B cell (primary cell): ENCODE measurements at regions of chr17 and their contacts with region 1.

Region 1: GRCh38 chr17:49997791-49998703 is 3.0 kb upstream of the DLX3 start:
- DNase-seq: peak; percentile 89
- ATAC-seq: peak; percentile 78
- H3K4me3 ChIP-seq: no peak overlapping the region
- H3K4me3 Mint-ChIP-seq: no peak overlapping the region
- H3K27ac ChIP-seq: no peak overlapping the region
- H3K27ac Mint-ChIP-seq: no peak overlapping the region
- H3K4me1 ChIP-seq: peaks cover 42 to 45% of the 10 kb centered on the region in 2 donors
- H3K4me1 Mint-ChIP-seq: peaks cover 38% of the 10 kb centered on the region
- H3K27me3 ChIP-seq: peaks cover 0 to 74% (median 52%) of the 10 kb centered on the region in 4 experiments
- H3K27me3 Mint-ChIP-seq: peaks cover 75% of the 10 kb centered on the region
- CTCF ChIP-seq: peak; percentile 92

Region 2: DNA sequence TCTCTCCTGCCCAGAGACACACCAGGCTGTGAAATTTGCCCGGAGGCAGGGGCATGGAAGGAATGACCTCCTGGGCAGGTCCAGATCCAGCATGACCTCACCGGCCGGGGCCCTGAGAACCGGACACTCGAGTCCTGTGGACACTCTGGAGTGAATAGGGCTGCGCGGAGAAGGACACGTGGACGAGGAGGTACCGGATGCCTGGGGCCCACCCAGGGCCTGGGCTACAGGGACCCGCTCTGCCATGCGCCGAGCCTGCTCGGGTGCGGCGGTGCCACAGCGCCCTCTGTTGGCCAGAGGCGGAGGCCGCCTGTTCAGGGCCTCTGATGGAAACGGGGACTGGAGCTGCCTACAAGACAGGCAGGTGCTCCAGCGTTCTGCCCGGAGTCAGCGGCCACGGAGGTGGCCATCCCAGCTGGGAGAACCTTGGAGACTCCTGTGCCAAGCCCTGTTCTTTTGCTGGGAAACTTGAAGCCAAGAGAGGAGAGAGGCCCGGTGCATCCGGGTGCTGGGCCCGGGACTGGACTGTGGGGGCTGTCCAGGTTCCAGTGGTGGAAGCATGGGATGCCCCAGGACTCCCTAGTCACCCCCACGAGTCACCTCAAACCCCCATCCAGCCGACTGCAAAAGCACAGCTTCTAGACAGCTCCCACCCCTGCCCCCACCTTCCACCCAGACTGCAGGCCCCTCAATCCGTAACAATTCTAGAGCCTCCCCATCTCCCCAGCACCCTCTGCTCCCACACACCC is 441.6 kb before region 1 on chr17:
- CTCF ChIA-PET with region 1: interaction called, 16 read pairs
- POLR2A ChIA-PET with region 1: no interaction called
- intact Hi-C with region 1: no loop called
- DNase-seq: peak; percentile 85
- ATAC-seq: peak; percentile 94
- H3K4me3 ChIP-seq: no peak overlapping the region
- H3K4me3 Mint-ChIP-seq: no peak overlapping the region
- H3K27ac ChIP-seq: no peak overlapping the region
- H3K27ac Mint-ChIP-seq: no peak overlapping the region
- H3K4me1 ChIP-seq: peaks cover 0 to 6% of the 10 kb centered on the region in 2 donors
- H3K4me1 Mint-ChIP-seq: peaks cover 1% of the 10 kb centered on the region
- H3K27me3 ChIP-seq: peaks cover 0 to 7% (median 0%) of the 10 kb centered on the region in 4 experiments
- H3K27me3 Mint-ChIP-seq: peaks cover 5% of the 10 kb centered on the region
- CTCF ChIP-seq: peak; percentile 98

Region 3: GRCh38 chr17:49861150-49861892 is 136.7 kb before region 1 on chr17:
- CTCF ChIA-PET with region 1: interaction called, 186 read pairs
- POLR2A ChIA-PET with region 1: no interaction called
- intact Hi-C with region 1: loop called (anchors 1 kb)
- DNase-seq: peak; percentile 78
- ATAC-seq: peak; percentile 76
- H3K4me3 ChIP-seq: no peak overlapping the region
- H3K4me3 Mint-ChIP-seq: no peak overlapping the region
- H3K27ac ChIP-seq: no peak overlapping the region
- H3K27ac Mint-ChIP-seq: no peak overlapping the region
- H3K4me1 ChIP-seq: no peaks in the 10 kb centered on the region
- H3K4me1 Mint-ChIP-seq: peaks cover 3% of the 10 kb centered on the region
- H3K27me3 ChIP-seq: peaks cover 0 to 31% (median 3%) of the 10 kb centered on the region in 4 experiments
- H3K27me3 Mint-ChIP-seq: peaks cover 34% of the 10 kb centered on the region
- CTCF ChIP-seq: peak; percentile 93

Region 4: DNA sequence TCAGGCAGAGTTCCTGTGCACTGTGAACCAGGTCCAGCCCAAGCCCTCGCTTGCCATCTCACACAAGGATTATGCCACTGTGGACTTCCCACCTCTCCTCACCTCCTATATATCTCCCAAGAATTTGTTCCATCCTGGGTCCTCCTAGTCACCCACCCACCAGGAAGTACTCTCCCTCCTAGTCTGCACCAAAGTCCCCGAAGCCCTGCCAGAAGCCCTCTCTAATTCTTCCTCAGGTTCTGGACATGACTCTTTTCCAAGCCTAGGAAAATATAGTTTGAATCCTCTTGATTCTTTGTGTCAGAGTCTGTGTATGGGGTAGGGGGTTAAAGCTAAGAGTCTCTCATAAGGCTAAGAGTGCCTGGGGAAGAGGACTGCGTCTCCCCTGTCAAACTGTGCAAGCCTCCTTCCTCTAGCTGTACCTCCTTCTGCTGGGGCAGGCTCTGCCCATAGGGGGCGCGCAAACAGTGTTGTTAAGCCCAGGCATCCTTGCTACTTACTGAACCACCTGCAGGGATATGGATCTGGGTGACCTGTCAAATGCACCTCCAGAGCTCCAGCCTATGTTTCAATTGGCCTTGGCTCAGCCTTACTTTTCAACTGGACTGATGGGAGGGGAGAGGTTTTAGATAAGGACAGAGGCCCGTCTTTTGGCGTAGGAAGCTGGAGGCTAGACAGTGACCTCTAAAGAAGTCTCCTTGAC is 45.7 kb before region 1 on chr17:
- CTCF ChIA-PET with region 1: interaction called, 74 read pairs
- POLR2A ChIA-PET with region 1: no interaction called
- intact Hi-C with region 1: loop called (anchors 1 kb)
- DNase-seq: peak; percentile 68
- ATAC-seq: peak; percentile 71
- H3K4me3 ChIP-seq: no peak overlapping the region
- H3K4me3 Mint-ChIP-seq: no peak overlapping the region
- H3K27ac ChIP-seq: no peak overlapping the region
- H3K27ac Mint-ChIP-seq: no peak overlapping the region
- H3K4me1 ChIP-seq: no peaks in the 10 kb centered on the region
- H3K4me1 Mint-ChIP-seq: no peaks in the 10 kb centered on the region
- H3K27me3 ChIP-seq: peaks cover 0 to 36% (median 3%) of the 10 kb centered on the region in 4 experiments
- H3K27me3 Mint-ChIP-seq: peaks cover 55% of the 10 kb centered on the region
- CTCF ChIP-seq: peak; percentile 66

Region 5: GRCh38 chr17:49977463-49978389 is 20.3 kb before region 1 on chr17:
- CTCF ChIA-PET with region 1: interaction called, 24 read pairs
- POLR2A ChIA-PET with region 1: no interaction called
- intact Hi-C with region 1: no loop called
- DNase-seq: no peak
- ATAC-seq: no peak
- H3K4me3 ChIP-seq: no peak overlapping the region
- H3K4me3 Mint-ChIP-seq: no peak overlapping the region
- H3K27ac ChIP-seq: no peak overlapping the region
- H3K27ac Mint-ChIP-seq: no peak overlapping the region
- H3K4me1 ChIP-seq: peaks cover 3 to 6% of the 10 kb centered on the region in 2 donors
- H3K4me1 Mint-ChIP-seq: no peaks in the 10 kb centered on the region
- H3K27me3 ChIP-seq: peaks cover 0 to 60% (median 25%) of the 10 kb centered on the region in 4 experiments
- H3K27me3 Mint-ChIP-seq: peaks cover 73% of the 10 kb centered on the region
- CTCF ChIP-seq: no peak

Region 6: GRCh38 chr17:50087246-50087911 is 89.3 kb after region 1 on chr17:
- CTCF ChIA-PET with region 1: interaction called, 16 read pairs
- POLR2A ChIA-PET with region 1: no interaction called
- intact Hi-C with region 1: no loop called
- DNase-seq: peak; percentile 80
- ATAC-seq: peak; percentile 92
- H3K4me3 ChIP-seq: no peak overlapping the region
- H3K4me3 Mint-ChIP-seq: no peak overlapping the region
- H3K27ac ChIP-seq: no peak overlapping the region
- H3K27ac Mint-ChIP-seq: no peak overlapping the region
- H3K4me1 ChIP-seq: no peaks in the 10 kb centered on the region
- H3K4me1 Mint-ChIP-seq: no peaks in the 10 kb centered on the region
- H3K27me3 ChIP-seq: peaks cover 0 to 3% (median 0%) of the 10 kb centered on the region in 4 experiments
- H3K27me3 Mint-ChIP-seq: no peaks in the 10 kb centered on the region
- CTCF ChIP-seq: peak; percentile 94

Region 7: DNA sequence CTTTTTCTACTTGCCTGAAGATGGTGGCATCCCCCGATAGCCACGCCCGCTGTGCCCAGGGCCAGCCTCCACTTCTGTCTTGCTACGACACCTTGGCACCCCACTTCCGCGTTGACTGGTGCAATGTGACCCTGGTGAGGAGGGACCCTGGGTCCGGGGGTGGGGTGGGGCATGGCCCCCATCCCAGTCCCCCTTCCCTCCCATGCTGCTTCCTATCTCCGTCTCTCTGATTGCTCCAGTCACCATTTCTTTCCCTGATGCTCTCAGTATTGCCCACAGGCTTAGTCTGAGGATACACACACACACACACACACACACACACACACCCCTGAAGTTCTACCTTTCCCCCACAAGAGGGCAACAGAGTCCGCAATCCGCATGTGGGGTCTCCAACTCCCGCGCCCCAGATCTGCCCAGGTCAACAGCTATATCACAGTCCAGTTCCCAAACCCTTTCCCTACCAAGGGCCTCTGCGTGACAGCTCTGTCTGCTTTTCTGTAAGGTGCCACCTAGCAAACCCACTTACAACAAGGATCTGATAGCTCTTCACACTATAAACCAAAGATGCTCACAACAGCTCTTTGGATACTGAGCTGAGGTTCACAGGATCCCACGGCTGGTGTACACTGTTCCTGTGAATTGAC is 171.2 kb after region 1 on chr17:
- CTCF ChIA-PET with region 1: no interaction called
- POLR2A ChIA-PET with region 1: no interaction called
- intact Hi-C with region 1: no loop called
- DNase-seq: peak; percentile 91
- ATAC-seq: peak; percentile 84
- H3K4me3 ChIP-seq: peak overlapping the region in 4 of 5 experiments; percentile 12 to 44 (median 29)
- H3K4me3 Mint-ChIP-seq: peak overlapping the region; percentile 64
- H3K27ac ChIP-seq: no peak overlapping the region
- H3K27ac Mint-ChIP-seq: peak overlapping the region; percentile 74
- H3K4me1 ChIP-seq: peaks cover 16 to 27% of the 10 kb centered on the region in 2 donors
- H3K4me1 Mint-ChIP-seq: peaks cover 13% of the 10 kb centered on the region
- H3K27me3 ChIP-seq: no peaks in the 10 kb centered on the region
- H3K27me3 Mint-ChIP-seq: no peaks in the 10 kb centered on the region
- CTCF ChIP-seq: peak; percentile 66

Region 8: DNA sequence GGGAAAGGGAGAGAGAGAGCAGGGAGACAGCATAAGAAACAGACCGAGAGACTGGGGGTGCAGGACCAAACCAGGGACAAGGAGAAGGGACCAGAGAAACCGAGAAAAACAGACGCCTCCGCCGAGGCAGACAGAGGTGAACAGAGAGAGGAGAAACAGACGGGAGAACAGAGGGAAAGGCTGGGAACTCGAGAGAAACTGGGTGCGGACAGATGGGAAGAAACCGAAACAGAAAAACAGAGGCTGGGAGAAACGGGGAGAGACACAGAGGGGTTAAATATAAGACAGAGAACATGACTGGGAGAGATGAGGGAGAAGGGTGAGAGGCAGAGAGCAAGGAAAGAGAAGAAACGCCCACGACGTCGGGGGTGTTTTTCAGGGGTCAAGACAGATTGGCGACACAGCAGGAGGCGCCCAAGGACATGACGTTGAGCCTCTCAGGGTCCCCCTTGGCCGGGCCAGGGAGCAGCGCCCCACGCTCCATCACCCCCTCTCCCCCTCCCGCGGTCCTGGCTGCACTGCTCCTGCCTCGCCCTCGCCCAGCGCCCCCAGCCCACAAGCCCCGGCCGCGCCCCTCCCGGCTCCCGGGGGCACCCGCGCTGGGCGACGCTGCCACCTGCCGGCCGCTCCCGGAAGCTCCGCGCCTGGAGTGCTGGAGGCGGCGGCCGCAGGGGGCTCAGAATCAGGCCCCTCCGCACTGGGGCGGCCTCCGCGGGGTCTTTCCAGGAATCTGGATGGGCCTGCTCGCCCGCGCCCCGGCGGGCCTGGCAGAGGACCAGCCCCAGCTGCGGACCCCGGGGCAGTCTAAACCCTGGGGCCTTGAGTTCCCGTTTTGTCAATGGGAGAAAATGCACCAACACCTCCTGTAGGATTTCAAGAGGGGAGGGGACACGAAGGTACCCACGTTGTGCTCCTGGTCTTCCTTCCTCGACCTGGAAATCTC is 274.9 kb after region 1 on chr17:
- CTCF ChIA-PET with region 1: no interaction called
- POLR2A ChIA-PET with region 1: no interaction called
- intact Hi-C with region 1: no loop called
- DNase-seq: peak; percentile 66
- ATAC-seq: peak; percentile 79
- H3K4me3 ChIP-seq: peak overlapping the region in 4 of 5 experiments; percentile 26 to 49 (median 32)
- H3K4me3 Mint-ChIP-seq: peak overlapping the region; percentile 85
- H3K27ac ChIP-seq: no peak overlapping the region
- H3K27ac Mint-ChIP-seq: no peak overlapping the region
- H3K4me1 ChIP-seq: peaks cover 7 to 8% of the 10 kb centered on the region in 2 donors
- H3K4me1 Mint-ChIP-seq: peaks cover 11% of the 10 kb centered on the region
- H3K27me3 ChIP-seq: peaks cover 0 to 52% (median 14%) of the 10 kb centered on the region in 4 experiments
- H3K27me3 Mint-ChIP-seq: peaks cover 39% of the 10 kb centered on the region
- CTCF ChIP-seq: peak; percentile 95